ENCODE measurements at regions of chr12 and their contacts with region 1.

Region 1: DNA sequence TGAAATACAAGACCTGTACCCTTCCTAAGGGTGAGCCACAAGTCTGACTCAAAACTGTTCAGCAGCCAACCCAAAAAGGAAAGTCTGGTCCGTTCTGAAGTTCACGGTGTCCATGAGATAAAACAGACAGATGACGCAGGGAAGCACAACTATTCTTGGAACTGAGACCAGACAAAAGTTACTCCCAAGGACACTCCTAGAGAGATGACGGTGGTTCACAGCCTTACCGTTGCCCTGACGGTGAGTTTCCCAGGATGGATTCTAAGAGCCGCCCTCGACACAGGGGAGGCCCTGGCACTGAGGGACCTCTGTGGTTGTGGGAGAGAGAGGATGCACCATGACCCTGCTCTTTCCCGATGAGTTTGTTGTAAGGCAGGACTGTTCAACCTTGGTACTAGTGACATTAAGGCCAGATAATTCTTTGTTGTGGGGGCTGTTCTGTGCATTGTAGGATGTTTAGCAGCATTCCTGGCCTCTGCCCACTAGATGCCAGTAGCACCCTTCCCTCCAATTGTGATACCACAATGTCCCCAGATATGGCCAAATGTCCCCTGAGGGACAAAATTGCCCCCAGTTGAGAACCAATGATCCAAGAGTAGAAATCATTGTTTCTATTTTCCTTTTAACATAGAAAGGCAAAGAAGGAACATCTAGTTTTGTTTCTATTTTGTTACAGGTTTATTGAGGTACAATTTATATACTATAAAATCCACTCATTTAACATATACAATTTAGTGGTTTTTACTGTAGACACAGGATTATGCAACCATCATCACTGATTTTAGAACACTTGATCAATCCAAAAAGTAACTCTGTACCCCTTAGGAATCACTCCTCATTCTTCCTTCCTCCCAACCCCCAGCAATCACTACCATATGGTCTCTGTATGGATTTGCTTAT is 23.0 kb downstream of the OR10P1 start:
- DNase-seq: peak; percentile 47
- ATAC-seq: no peak
- H3K4me3 Mint-ChIP-seq: no peak overlapping the region
- H3K27ac Mint-ChIP-seq: no peak overlapping the region
- H3K4me1 Mint-ChIP-seq: no peaks in the 10 kb centered on the region
- H3K27me3 Mint-ChIP-seq: peaks cover 1% of the 10 kb centered on the region
- CTCF ChIP-seq: peak; percentile 34

Region 2: GRCh38 chr12:55194382-55194781 is 465.4 kb before region 1 on chr12:
- CTCF ChIA-PET with region 1: interaction called, 25 read pairs
- POLR2A ChIA-PET with region 1: interaction called, 5 read pairs
- intact Hi-C with region 1: no loop called
- DNase-seq: no peak
- ATAC-seq: no peak
- H3K4me3 Mint-ChIP-seq: no peak overlapping the region
- H3K27ac Mint-ChIP-seq: no peak overlapping the region
- H3K4me1 Mint-ChIP-seq: no peaks in the 10 kb centered on the region
- H3K27me3 Mint-ChIP-seq: peaks cover 40% of the 10 kb centered on the region
- CTCF ChIP-seq: no peak

Region 3: GRCh38 chr12:55629058-55629841 is 30.5 kb before region 1 on chr12:
- CTCF ChIA-PET with region 1: interaction called, 30 read pairs
- POLR2A ChIA-PET with region 1: no interaction called
- intact Hi-C with region 1: no loop called
- DNase-seq: peak; percentile 48
- ATAC-seq: peak; percentile 78
- H3K4me3 Mint-ChIP-seq: no peak overlapping the region
- H3K27ac Mint-ChIP-seq: peak overlapping the region; percentile 36
- H3K4me1 Mint-ChIP-seq: peaks cover 24% of the 10 kb centered on the region
- H3K27me3 Mint-ChIP-seq: peaks cover 24% of the 10 kb centered on the region
- CTCF ChIP-seq: no peak

Region 4: GRCh38 chr12:55670276-55670675 is 10.5 kb after region 1 on chr12:
- CTCF ChIA-PET with region 1: interaction called, 17 read pairs
- POLR2A ChIA-PET with region 1: interaction called, 3 read pairs
- intact Hi-C with region 1: no loop called
- DNase-seq: no peak
- ATAC-seq: no peak
- H3K4me3 Mint-ChIP-seq: no peak overlapping the region
- H3K27ac Mint-ChIP-seq: no peak overlapping the region
- H3K4me1 Mint-ChIP-seq: no peaks in the 10 kb centered on the region
- H3K27me3 Mint-ChIP-seq: peaks cover 3% of the 10 kb centered on the region
- CTCF ChIP-seq: no peak

Region 5: GRCh38 chr12:55696796-55697462 is 37.2 kb after region 1 on chr12:
- CTCF ChIA-PET with region 1: interaction called, 16 read pairs
- POLR2A ChIA-PET with region 1: no interaction called
- intact Hi-C with region 1: no loop called
- DNase-seq: no peak
- ATAC-seq: no peak
- H3K4me3 Mint-ChIP-seq: no peak overlapping the region
- H3K27ac Mint-ChIP-seq: no peak overlapping the region
- H3K4me1 Mint-ChIP-seq: no peaks in the 10 kb centered on the region
- H3K27me3 Mint-ChIP-seq: no peaks in the 10 kb centered on the region
- CTCF ChIP-seq: no peak

Measured in activated CD8-positive, alpha-beta T cell treated with anti-CD3 and anti-CD28 coated beads for 36 hours (primary cell).